Prostate gland (tissue), 2 donors: ENCODE measurements at regions of chr3 and their contacts with region 1.

Region 1: DNA sequence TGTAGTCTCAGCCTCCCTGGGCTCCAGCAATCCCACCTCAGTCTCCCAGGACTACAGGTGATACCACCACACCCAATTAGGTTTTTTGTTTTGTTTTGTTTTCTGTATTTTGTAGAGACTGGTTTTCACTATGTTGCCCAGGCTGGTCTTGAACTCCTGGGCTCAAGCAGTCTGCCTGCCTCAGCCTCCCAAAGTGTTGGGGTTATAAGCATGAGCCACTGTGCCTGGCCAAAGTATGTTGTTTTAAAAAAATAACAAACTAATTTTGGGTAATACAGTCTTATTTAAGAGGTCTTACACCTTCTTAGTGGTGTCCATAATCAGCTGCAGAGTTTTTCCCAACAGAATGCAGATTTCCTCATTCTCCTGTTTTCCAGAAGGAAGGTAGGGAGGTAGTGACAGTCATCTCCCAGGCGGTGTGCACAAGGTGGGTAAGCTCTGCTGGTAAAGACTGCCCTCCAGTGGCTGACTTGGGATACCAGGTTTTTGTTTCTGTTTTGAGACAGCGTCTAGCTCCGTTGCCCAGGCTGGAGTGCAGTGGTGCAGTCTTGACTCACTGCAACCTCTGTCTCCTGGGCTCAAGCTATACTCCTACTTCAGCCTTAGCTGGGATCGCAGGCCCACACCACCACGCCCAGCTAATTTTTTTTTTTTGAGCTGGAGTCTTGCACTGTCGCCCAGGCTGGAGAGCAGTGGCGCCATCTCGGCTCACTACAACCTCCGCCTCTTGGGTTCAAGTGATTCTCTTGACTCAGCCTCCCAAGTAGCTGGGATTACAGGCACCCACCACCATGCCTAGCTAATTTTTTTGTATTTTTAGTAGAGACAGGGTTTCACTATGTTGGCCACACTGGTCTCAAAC is 58.4 kb downstream of the MAP6D1 start:
- DNase-seq: peak; percentile 78
- H3K4me3 ChIP-seq: no peak overlapping the region
- H3K27ac ChIP-seq: peak overlapping the region; percentile 78 to 81
- H3K4me1 ChIP-seq: no peaks in the 10 kb centered on the region
- H3K27me3 ChIP-seq: no peaks in the 10 kb centered on the region
- CTCF ChIP-seq: peak; percentile 69 to 90 (median 84)
- POLR2A ChIP-seq: no peak

Region 2: GRCh38 chr3:183252973-183253901 is 513.7 kb before region 1 on chr3 and contains the start of gene B3GNT5:
- intact Hi-C with region 1: loop called (anchors 10 kb)
- DNase-seq: peak; percentile 91
- H3K4me3 ChIP-seq: peak within 1 kb of the TSS; percentile 75 to 87
- H3K27ac ChIP-seq: peak within 1 kb of the TSS; percentile 94 to 96
- H3K4me1 ChIP-seq: no peaks in the 10 kb centered on the region
- H3K27me3 ChIP-seq: no peaks in the 10 kb centered on the region
- CTCF ChIP-seq: no peak
- POLR2A ChIP-seq: peak; percentile 35
- total RNA-seq, gene B3GNT5: 5.9 to 7.2 TPM

Region 3: GRCh38 chr3:183468424-183468823 is 298.6 kb before region 1 on chr3:
- intact Hi-C with region 1: loop called (anchors 2 kb)
- DNase-seq: no peak
- H3K4me3 ChIP-seq: no peak overlapping the region
- H3K27ac ChIP-seq: no peak overlapping the region
- H3K4me1 ChIP-seq: no peaks in the 10 kb centered on the region
- H3K27me3 ChIP-seq: no peaks in the 10 kb centered on the region
- CTCF ChIP-seq: no peak
- POLR2A ChIP-seq: no peak

Region 4: GRCh38 chr3:183635431-183636220 is 131.3 kb before region 1 on chr3 and contains the start of gene KLHL24:
- intact Hi-C with region 1: loop called (anchors 5 kb)
- DNase-seq: peak; percentile 95
- H3K4me3 ChIP-seq: peak within 1 kb of the TSS; percentile 91 to 95
- H3K27ac ChIP-seq: peak within 1 kb of the TSS; percentile 98 to 100
- H3K4me1 ChIP-seq: peaks cover 3% of the 10 kb centered on the region
- H3K27me3 ChIP-seq: no peaks in the 10 kb centered on the region
- CTCF ChIP-seq: peak in 2 of 4 experiments; percentile 16 to 19
- POLR2A ChIP-seq: peak; percentile 100
- total RNA-seq, gene KLHL24: 69.5 to 79.2 TPM

Region 5: DNA sequence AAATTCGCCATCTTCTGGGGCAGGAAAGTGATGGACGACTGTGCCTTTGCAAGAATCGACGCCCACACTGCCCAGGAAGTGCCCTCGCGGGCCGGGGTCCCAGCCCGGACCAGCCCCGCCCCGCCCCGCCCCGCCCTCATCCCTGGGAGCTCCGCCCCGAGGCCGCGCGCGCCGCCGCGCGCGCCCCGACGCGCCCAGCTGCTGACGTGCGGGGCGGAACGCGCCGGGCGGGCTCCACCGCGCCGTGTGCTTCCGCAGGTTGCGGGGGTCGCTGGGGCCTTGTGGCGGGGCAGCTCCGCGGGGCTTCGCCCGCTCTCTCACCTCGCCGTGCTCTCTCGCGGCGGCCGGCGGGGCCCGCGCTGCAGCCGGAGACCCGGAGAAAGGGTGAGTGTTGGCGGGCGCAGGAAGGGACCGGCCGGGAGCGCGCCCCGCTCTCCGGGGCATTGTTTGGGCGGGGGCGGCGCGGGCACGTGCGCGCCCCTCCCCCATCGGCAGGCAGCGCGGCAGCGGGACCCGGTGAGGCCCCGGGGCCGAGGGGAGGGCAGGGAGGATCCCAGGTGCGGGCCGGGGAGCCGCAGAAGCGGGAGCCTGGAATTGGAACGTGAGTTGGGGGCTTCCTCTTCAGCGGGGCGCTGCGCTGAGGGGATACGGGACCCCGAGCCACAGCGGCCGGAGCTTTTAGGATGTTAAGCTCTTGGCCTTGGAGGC is 69.2 kb before region 1 on chr3 and contains the start of gene YEATS2:
- intact Hi-C with region 1: loop called (anchors 5 kb)
- DNase-seq: peak; percentile 43
- H3K4me3 ChIP-seq: peak within 1 kb of the TSS; percentile 86 to 96
- H3K27ac ChIP-seq: peak within 1 kb of the TSS; percentile 88
- H3K4me1 ChIP-seq: peaks cover 5% of the 10 kb centered on the region
- H3K27me3 ChIP-seq: no peaks in the 10 kb centered on the region
- CTCF ChIP-seq: no peak
- POLR2A ChIP-seq: peak; percentile 54
- total RNA-seq, gene YEATS2: 24.1 to 24.8 TPM